ENCODE measurements at regions of chr2 and their contacts with region 1.

Region 1: DNA sequence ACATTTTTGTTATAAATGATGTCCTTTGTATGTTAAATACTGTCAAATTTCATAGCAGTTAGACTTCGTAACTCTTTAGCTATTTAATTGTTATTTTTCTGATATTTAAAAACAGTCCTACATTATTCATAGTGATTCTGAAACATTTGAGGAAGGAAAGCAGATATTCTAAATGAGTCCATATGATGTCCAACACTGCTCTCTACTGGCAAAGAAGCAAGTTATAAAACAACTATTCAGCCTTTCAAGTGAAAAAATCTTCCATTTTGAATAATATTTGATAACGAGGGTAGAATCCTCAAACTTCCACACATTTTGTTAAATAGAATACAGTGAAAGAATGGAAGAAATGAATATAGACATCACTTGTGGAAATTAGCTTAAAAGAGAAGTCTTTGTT is 220.8 kb downstream of the GULP1 start:
- DNase-seq: no peak
- ATAC-seq: peak in 1 of 2 donors; percentile 38

Region 2: DNA sequence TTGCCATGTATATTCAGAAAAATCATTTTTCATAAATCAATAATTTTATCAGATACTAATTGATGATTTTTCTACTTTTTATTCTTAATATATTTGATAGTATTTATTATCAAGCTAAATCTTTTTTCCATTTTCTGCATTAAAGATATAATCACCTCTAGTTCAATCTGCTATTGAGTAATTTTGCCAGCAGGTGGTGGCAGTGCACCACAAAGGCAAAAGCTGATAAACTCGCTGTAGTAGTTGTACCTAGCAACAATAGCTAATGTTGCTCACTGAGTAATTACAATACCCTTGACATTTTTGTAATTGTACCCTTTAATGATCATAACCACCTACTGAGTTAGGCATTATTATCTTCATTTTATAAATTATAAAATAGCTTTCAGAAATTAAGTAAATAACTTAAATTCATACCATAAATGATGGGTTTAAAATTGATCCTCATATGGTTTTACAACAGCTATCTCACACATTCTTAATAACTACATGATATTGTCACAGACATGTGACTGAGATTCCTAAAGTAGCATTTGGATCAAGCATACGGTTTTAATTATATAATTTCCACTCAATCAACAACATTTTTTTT is 1012.4 kb before region 1 on chr2:
- intact Hi-C with region 1: loop called in 1 of 2 experiments (anchors 10 kb)
- DNase-seq: peak; percentile 42
- ATAC-seq: peak; percentile 57 to 67

Region 3: GRCh38 chr2:188645986-188646385 is 133.5 kb after region 1 on chr2:
- intact Hi-C with region 1: no loop called
- DNase-seq: no peak
- ATAC-seq: no peak

Measured in left cardiac atrium (tissue), 4 donors.